Activated CD8-positive, alpha-beta memory T cell treated with anti-CD3 and anti-CD28 coated beads, Interleukin-2, amount 10 ng/mL, durations not matched to agents 7 days and 5 days (primary cell): ENCODE measurements at regions of chr10 and their contacts with region 1.

Region 1: DNA sequence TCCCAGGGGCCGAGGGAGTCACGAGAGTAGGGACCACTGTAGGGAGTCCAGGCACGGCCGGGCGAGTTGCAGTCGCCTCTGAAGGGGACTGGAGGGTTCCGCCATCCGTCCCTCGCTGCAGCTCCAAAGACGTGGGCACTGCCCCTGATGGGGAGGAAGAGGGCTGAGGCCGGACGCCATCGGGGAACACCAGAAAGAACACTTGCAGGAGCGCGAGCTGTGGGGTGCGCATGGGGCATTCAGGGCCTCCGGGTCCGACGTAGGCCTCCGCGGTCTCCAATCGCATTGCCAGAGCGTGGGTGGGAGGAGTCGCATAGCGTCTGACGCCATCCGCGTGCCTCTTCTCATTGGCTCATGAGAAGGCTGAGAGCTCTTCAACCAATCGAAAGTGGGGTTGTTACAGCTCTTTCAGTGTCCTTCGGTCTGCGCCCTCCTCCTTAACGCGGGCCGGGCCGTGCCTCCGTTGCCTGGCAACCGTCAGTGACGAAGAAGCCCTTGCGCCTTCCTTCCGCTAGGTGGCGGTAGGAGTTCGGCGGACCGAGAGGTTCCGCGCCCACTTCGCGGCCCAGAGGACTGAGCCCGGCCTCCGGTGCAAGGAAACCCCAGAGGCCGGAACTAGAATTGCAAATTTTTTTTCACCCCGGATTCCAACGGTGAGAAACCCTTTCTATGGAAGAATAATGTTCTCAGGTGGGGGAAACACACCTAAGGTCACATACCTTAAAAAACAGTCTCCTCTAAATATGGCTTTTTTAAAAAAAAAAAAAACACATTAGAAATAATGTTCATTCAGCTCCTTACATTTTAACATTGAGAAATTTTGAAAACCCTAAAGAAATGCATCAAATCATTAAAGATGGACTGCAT is at the start of gene TCTN3:
- DNase-seq: peak; percentile 98
- ATAC-seq: peak; percentile 99
- H3K4me3 Mint-ChIP-seq: peak within 1 kb of the TSS; percentile 99
- H3K27ac Mint-ChIP-seq: peak within 1 kb of the TSS; percentile 85
- H3K4me1 Mint-ChIP-seq: peaks cover 44% of the 10 kb centered on the region
- H3K27me3 Mint-ChIP-seq: no peaks in the 10 kb centered on the region
- total RNA-seq, gene TCTN3: 29.7 to 69.2 TPM

Region 2: GRCh38 chr10:95675403-95676112 is 18.3 kb before region 1 on chr10:
- CTCF ChIA-PET with region 1: interaction called, 16 read pairs
- DNase-seq: no peak
- ATAC-seq: no peak
- H3K4me3 Mint-ChIP-seq: no peak overlapping the region
- H3K27ac Mint-ChIP-seq: no peak overlapping the region
- H3K4me1 Mint-ChIP-seq: no peaks in the 10 kb centered on the region
- H3K27me3 Mint-ChIP-seq: no peaks in the 10 kb centered on the region

Region 3: GRCh38 chr10:95716466-95717224 is 22.7 kb after region 1 on chr10:
- CTCF ChIA-PET with region 1: interaction called, 11 read pairs
- DNase-seq: no peak
- ATAC-seq: no peak
- H3K4me3 Mint-ChIP-seq: no peak overlapping the region
- H3K27ac Mint-ChIP-seq: no peak overlapping the region
- H3K4me1 Mint-ChIP-seq: peaks cover 2% of the 10 kb centered on the region
- H3K27me3 Mint-ChIP-seq: peaks cover 2% of the 10 kb centered on the region

Region 4: GRCh38 chr10:95755511-95756004 is 61.7 kb after region 1 on chr10:
- CTCF ChIA-PET with region 1: interaction called, 74 read pairs
- DNase-seq: peak; percentile 74
- ATAC-seq: peak; percentile 37
- H3K4me3 Mint-ChIP-seq: peak overlapping the region; percentile 89
- H3K27ac Mint-ChIP-seq: peak overlapping the region; percentile 95
- H3K4me1 Mint-ChIP-seq: peaks cover 53% of the 10 kb centered on the region
- H3K27me3 Mint-ChIP-seq: peaks cover 5% of the 10 kb centered on the region

Region 5: GRCh38 chr10:95793401-95794045 is 99.6 kb after region 1 on chr10:
- CTCF ChIA-PET with region 1: interaction called, 31 read pairs
- DNase-seq: peak; percentile 93
- ATAC-seq: peak; percentile 62
- H3K4me3 Mint-ChIP-seq: peak overlapping the region; percentile 4
- H3K27ac Mint-ChIP-seq: peak overlapping the region; percentile 97
- H3K4me1 Mint-ChIP-seq: peaks cover 92% of the 10 kb centered on the region
- H3K27me3 Mint-ChIP-seq: no peaks in the 10 kb centered on the region

Region 6: GRCh38 chr10:95841661-95842498 is 148.0 kb after region 1 on chr10:
- CTCF ChIA-PET with region 1: interaction called, 444 read pairs
- DNase-seq: no peak
- ATAC-seq: peak; percentile 65
- H3K4me3 Mint-ChIP-seq: no peak overlapping the region
- H3K27ac Mint-ChIP-seq: peak overlapping the region; percentile 84
- H3K4me1 Mint-ChIP-seq: peaks cover 79% of the 10 kb centered on the region
- H3K27me3 Mint-ChIP-seq: no peaks in the 10 kb centered on the region

Region 7: DNA sequence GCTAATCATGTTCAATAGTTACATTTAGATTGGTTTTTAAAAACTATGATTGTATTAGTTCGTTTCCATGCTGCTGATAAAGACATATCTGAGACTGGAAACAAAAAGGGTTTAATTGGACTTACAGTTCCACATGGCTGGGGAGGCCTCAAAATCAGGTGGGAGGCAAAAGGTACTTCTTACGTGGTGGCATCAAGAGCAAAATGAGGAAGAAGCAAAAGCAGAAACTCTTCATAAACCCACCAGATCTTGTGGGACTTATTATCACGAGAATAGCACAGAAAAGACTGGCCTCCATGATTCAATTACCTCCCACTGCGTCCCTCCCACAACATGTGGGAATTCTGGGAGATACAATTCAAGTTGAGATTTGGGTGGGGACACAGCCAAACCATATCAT is 179.8 kb after region 1 on chr10:
- CTCF ChIA-PET with region 1: interaction called, 43 read pairs
- DNase-seq: no peak
- ATAC-seq: no peak
- H3K4me3 Mint-ChIP-seq: no peak overlapping the region
- H3K27ac Mint-ChIP-seq: no peak overlapping the region
- H3K4me1 Mint-ChIP-seq: peaks cover 16% of the 10 kb centered on the region
- H3K27me3 Mint-ChIP-seq: no peaks in the 10 kb centered on the region